ENCODE measurements at regions of chr20 and their contacts with region 1.

Region 1: DNA sequence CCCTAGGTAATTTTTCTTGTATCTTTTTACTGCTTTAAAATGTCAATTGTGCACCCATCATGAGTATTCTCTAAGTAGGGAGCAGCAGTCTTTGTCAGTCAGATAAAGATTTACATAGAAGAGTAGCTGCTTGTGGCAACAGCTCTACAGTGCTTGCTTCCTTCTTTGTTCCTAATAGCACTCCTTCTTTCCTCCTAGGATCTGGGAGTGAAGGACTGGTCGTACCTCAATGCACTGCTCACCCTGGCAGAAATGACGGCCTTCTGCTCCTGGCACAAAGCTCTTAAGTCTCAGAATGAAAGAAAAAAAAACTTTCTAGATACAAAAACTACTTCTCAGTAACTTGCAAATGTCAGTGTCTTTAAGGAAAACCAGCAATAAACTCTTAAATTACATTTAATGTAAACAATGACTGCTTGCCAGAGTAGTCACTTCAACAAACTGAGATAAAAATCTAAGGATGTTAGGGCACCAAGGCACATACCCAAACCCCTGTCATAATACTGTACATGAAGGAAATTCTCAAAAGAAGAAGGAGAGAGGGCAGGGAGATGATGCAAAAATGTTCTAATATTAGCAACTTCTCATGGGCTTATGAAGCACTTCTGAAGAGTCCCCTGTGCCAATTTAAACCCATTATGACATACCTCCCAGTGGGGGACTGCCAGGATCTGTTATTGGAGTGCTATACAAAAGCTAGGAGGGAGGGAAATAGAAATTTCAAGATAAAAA is 34.0 kb downstream of the NCOA6 start:
- DNase-seq: peak; percentile 67
- ATAC-seq: peak; percentile 78
- H3K4me3 ChIP-seq: no peak overlapping the region
- H3K27ac ChIP-seq: peak overlapping the region; percentile 55
- H3K4me1 ChIP-seq: peaks cover 13% of the 10 kb centered on the region
- H3K27me3 ChIP-seq: no peaks in the 10 kb centered on the region
- CTCF ChIP-seq: no peak
- POLR2A ChIP-seq: no peak
- RAD21 ChIP-seq: no peak

Region 2: GRCh38 chr20:34834459-34834893 is 43.0 kb after region 1 on chr20:
- CTCF ChIA-PET with region 1: no interaction called
- POLR2A ChIA-PET with region 1: no interaction called
- dilution Hi-C with region 1: no loop called
- in situ Hi-C with region 1: no loop called
- intact Hi-C with region 1: no loop called
- DNase-seq: peak; percentile 45
- ATAC-seq: peak; percentile 80
- H3K4me3 ChIP-seq: no peak overlapping the region
- H3K27ac ChIP-seq: no peak overlapping the region
- H3K4me1 ChIP-seq: no peaks in the 10 kb centered on the region; the same call in 1 of the 2 replicates
- H3K27me3 ChIP-seq: peaks cover 15% of the 10 kb centered on the region
- CTCF ChIP-seq: peak; percentile 45
- POLR2A ChIP-seq: no peak
- RAD21 ChIP-seq: peak; percentile 60

Region 3: DNA sequence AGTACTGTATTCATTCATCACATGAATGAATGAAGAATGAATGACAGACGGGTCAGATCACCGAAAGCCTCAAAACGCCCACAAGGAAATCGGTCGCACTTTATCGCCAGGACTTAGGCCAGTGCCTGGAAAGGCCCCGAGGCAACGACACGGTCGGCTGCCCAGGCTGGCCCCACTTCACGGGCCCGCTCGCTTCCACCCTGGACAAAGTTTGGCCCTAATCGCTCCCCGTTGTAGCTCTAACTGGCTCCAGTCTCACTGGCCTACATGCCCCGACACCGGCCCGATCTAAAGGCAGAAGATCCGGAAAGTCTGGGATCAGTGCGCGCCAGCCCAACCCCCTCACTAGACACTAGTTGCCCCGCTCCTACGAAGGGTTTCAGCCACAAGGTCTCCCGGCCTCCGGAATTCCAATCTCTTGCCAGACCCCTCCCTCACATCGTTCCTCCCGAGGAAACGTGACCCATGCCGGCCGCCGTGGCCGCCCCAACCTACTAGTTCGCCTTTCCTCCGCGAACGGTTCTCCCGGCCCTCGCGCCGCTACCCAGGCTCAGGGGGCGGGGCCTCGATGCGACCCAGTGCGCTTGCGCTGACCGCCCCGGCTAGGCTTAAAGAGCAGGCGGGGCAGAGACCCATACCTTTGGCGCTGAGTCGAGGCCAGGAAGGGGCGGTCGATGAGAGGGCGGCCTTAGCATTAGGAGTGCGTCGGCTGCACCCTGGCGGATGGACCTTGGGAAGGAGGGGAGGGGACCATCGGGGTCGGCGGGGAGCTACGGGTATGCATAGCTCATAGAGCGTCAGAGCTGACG is 164.0 kb after region 1 on chr20 and contains the starts of genes GSS and MYH7B:
- CTCF ChIA-PET with region 1: no interaction called
- POLR2A ChIA-PET with region 1: no interaction called
- dilution Hi-C with region 1: no loop called
- in situ Hi-C with region 1: no loop called
- intact Hi-C with region 1: no loop called
- DNase-seq: peak; percentile 93
- ATAC-seq: peak; percentile 96
- H3K4me3 ChIP-seq: peak within 1 kb of the TSS; percentile 62
- H3K27ac ChIP-seq: peak within 1 kb of the TSS; percentile 88
- H3K4me1 ChIP-seq: peaks cover 4% of the 10 kb centered on the region
- H3K27me3 ChIP-seq: no peaks in the 10 kb centered on the region
- CTCF ChIP-seq: peak; percentile 56
- POLR2A ChIP-seq: peak; percentile 91
- RAD21 ChIP-seq: peak; percentile 70
- total RNA-seq, gene GSS: 70.5 and 90.0 TPM in 2 replicates
- total RNA-seq, gene MYH7B: not detected in 2 replicates

Region 4: GRCh38 chr20:36145877-36146707 is 1354.6 kb after region 1 on chr20:
- CTCF ChIA-PET with region 1: interaction called, 12 read pairs
- POLR2A ChIA-PET with region 1: no interaction called
- dilution Hi-C with region 1: no loop called
- in situ Hi-C with region 1: no loop called
- intact Hi-C with region 1: no loop called
- DNase-seq: peak; percentile 44
- ATAC-seq: peak; percentile 52
- H3K4me3 ChIP-seq: no peak overlapping the region
- H3K27ac ChIP-seq: no peak overlapping the region
- H3K4me1 ChIP-seq: peaks cover 6% of the 10 kb centered on the region; the same call in 1 of the 2 replicates
- H3K27me3 ChIP-seq: peaks cover 7% of the 10 kb centered on the region
- CTCF ChIP-seq: no peak
- POLR2A ChIP-seq: no peak
- RAD21 ChIP-seq: no peak